HEK293 (cell line): ENCODE measurements at regions of chr17 and their contacts with region 1.

Region 1: GRCh38 chr17:68398691-68399637 is 58.3 kb downstream of the WIPI1 start:
- H3K4me3 ChIP-seq: no peak overlapping the region
- H3K27ac ChIP-seq: no peak overlapping the region
- H3K4me1 ChIP-seq: no peaks in the 10 kb centered on the region; the same call in 1 of the 2 replicates
- CTCF ChIP-seq: peak; percentile 93

Region 2: DNA sequence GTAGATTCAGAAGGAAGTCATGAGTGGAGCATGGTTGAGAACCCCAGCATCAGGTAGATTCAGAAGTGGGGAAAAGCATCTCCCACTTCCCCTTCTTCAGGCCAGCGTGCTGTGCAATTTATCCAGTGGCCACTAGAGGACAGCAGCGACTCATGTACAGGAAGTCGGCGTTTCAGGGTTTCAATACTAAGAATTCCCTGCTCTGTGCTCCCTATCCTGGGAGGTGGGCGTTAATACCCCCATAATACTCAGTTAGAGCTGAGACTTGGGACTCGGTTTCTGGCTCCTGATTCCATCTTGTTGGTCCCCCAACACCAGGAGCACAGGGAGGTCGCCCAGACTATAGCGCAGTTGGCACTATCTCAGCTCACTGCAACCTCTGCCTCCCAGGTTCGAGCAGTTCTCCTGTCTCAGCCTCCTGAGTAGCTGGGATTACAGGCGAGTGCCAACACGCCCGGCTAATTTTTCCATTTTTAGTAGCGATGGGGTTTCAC is 226.5 kb before region 1 on chr17:
- CTCF ChIA-PET with region 1: interaction called, 14 read pairs
- POLR2A ChIA-PET with region 1: no interaction called
- H3K4me3 ChIP-seq: no peak overlapping the region
- H3K27ac ChIP-seq: no peak overlapping the region
- H3K4me1 ChIP-seq: no peaks in the 10 kb centered on the region
- CTCF ChIP-seq: peak; percentile 89

Region 3: GRCh38 chr17:68291844-68292695 is 106.9 kb before region 1 on chr17:
- CTCF ChIA-PET with region 1: interaction called, 18 read pairs
- POLR2A ChIA-PET with region 1: interaction called, 5 read pairs
- H3K4me3 ChIP-seq: peak overlapping the region; percentile 55
- H3K27ac ChIP-seq: peak overlapping the region; percentile 74; the same call in 1 of the 2 replicates
- H3K4me1 ChIP-seq: peaks cover 7% of the 10 kb centered on the region; the same call in 1 of the 2 replicates
- CTCF ChIP-seq: peak; percentile 71

Region 4: GRCh38 chr17:68346448-68346847 is 52.5 kb before region 1 on chr17:
- CTCF ChIA-PET with region 1: no interaction called
- POLR2A ChIA-PET with region 1: no interaction called
- H3K4me3 ChIP-seq: no peak overlapping the region
- H3K27ac ChIP-seq: no peak overlapping the region
- H3K4me1 ChIP-seq: no peaks in the 10 kb centered on the region
- CTCF ChIP-seq: no peak

Region 5: GRCh38 chr17:68381076-68381900 is 17.7 kb before region 1 on chr17:
- CTCF ChIA-PET with region 1: interaction called, 23 read pairs
- POLR2A ChIA-PET with region 1: no interaction called
- H3K4me3 ChIP-seq: no peak overlapping the region
- H3K27ac ChIP-seq: no peak overlapping the region; the same call in 1 of the 2 replicates
- H3K4me1 ChIP-seq: peaks cover 29% of the 10 kb centered on the region
- CTCF ChIP-seq: no peak

Region 6: DNA sequence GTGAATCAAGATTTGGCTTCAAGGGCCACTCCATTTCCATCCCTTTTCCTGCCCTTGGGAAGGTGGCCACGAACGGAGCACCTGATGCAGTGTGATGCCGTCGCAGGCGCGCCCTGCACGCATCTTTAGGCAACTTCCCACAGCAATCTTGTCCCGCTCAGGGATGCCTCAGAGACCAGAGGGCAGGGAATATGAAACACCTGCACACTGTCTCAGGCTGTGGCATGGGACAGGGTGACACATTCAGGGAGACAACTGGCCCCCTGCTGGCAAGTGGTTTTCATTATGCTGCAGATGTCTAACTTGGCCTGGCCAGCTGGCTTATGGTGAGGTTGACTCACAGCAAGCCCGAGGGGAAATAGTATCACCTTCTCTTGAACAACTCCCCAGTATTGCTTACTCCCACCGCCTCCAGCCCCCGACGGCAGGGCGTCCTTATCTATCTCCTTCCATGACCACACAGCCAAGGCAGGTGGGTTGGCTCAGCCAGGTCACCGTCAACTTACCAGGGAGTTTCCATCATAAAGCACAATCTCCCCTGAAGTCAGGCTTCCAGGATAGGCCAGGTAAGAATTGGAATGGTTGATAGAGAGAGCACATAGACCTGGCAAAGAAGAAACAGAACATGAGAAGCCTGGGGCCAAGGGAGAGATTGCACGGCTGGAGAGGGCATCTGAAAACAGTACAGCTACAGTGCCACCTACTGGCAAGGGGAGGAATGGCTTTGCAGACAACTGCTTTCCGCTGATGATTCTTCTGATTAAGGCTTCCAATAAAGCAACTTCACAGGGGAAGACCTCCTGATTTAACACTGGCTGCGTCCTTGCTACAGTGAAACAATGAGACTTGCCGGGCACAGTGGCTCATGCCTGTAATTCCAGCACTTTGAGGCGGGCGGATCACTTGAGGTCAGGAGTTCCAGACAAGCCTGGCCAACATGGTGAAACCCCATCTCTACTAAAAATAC is 37.2 kb after region 1 on chr17:
- CTCF ChIA-PET with region 1: interaction called, 17 read pairs
- POLR2A ChIA-PET with region 1: no interaction called
- H3K4me3 ChIP-seq: no peak overlapping the region
- H3K27ac ChIP-seq: no peak overlapping the region
- H3K4me1 ChIP-seq: peaks cover 6% of the 10 kb centered on the region
- CTCF ChIP-seq: peak; percentile 79

Region 7: DNA sequence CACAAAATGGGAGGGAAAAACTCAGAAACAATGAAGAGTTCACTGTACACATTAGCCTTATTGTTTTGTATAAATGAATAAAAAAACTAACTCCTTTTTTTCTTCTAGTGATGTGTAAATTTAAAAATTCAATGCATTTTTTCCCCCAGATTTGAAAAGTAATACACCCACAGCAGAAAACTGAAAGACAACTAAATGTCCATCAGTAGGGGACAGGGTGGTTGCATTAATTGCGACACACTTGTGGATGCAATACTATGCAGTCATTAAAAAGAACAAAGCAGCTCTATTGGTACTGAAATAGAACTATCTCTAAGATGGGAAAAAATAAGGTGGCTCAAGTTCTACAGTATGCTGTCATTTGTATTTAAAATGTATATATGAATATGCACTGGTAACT is 72.0 kb after region 1 on chr17:
- CTCF ChIA-PET with region 1: no interaction called
- POLR2A ChIA-PET with region 1: no interaction called
- H3K4me3 ChIP-seq: no peak overlapping the region
- H3K27ac ChIP-seq: no peak overlapping the region
- H3K4me1 ChIP-seq: no peaks in the 10 kb centered on the region
- CTCF ChIP-seq: no peak